Dorsolateral prefrontal cortex (tissue), 120 donors: ENCODE measurements at regions of chr17 and their contacts with region 1.

Region 1: GRCh38 chr17:72952220-72952984 is 140.1 kb downstream of the SLC39A11 start:
- DNase-seq: peak in 1 of 10 donors; percentile 18
- H3K4me3 ChIP-seq: no peak overlapping the region
- H3K27ac ChIP-seq: peak overlapping the region in 1 of 59 donors; percentile 27
- H3K27me3 ChIP-seq: no peaks in the 10 kb centered on the region
- CTCF ChIP-seq: no peak

Region 2: GRCh38 chr17:72985881-72986720 is 33.7 kb after region 1 on chr17:
- intact Hi-C with region 1: no loop called
- DNase-seq: peak; percentile 45 to 85 (median 74)
- H3K4me3 ChIP-seq: no peak overlapping the region
- H3K27ac ChIP-seq: peak overlapping the region in 25 of 59 donors; percentile 0 to 88 (median 53)
- H3K27me3 ChIP-seq: no peaks in the 10 kb centered on the region
- CTCF ChIP-seq: peak; percentile 65 to 95 (median 86)

Region 3: DNA sequence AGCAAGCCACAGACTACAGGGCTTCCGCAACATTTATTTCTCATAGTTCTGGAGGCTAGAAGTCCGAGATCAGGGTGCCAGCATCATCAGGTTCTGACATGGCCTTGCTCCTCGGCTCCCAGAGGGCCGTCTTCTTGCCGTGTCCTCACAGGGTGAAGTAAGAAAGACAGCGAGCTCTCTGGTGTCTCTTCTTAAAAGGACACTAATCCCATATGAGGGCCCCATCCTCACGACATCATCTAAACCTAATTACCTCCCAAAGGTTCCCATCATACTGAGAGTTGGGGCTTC is 51.8 kb after region 1 on chr17:
- intact Hi-C with region 1: loop called in 1 of 2 experiments (anchors 5 kb)
- DNase-seq: no peak
- H3K4me3 ChIP-seq: no peak overlapping the region
- H3K27ac ChIP-seq: no peak overlapping the region
- H3K27me3 ChIP-seq: no peaks in the 10 kb centered on the region
- CTCF ChIP-seq: no peak